ENCODE measurements at regions of chr11 and their contacts with region 1.

Region 1: DNA sequence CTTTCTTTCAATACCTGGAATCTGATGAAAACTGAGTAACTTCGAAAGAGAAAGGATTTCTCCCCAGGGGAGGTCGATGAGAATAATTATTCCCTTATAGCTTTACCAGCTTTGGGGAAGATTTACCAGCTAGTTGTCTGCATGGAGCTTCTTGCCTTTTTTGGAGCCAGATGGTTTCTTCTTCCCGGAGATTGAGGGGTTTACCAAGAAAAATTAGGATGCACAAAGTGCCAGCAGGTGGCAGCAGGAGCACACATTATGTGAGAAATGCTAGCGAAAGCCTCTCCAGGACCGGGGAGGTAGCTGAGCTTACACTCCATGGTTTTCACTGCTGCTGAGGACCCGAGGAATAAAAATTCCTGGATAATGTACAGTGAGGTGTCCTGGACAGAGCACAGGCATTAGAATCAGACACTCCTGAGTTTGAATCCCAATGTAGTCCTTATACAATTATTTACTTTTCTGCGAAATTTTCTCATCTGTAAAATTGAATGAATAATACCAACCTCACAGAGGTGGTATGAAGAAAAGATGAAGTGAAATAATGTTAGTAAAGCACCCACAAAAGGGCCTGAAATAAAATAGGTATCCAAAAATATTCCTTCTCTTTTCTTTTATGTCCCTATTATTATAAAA is 46.0 kb upstream of the PARVA start:
- DNase-seq: peak; percentile 85
- ATAC-seq: peak; percentile 36
- H3K4me3 Mint-ChIP-seq: no peak overlapping the region
- H3K27ac Mint-ChIP-seq: no peak overlapping the region
- H3K4me1 Mint-ChIP-seq: peaks cover 3% of the 10 kb centered on the region
- H3K27me3 Mint-ChIP-seq: no peaks in the 10 kb centered on the region

Region 2: GRCh38 chr11:11876458-11876857 is 454.9 kb before region 1 on chr11:
- CTCF ChIA-PET with region 1: no interaction called
- POLR2A ChIA-PET with region 1: no interaction called
- intact Hi-C with region 1: no loop called
- DNase-seq: peak; percentile 23
- ATAC-seq: no peak
- H3K4me3 Mint-ChIP-seq: no peak overlapping the region
- H3K27ac Mint-ChIP-seq: no peak overlapping the region
- H3K4me1 Mint-ChIP-seq: peaks cover 44% of the 10 kb centered on the region
- H3K27me3 Mint-ChIP-seq: no peaks in the 10 kb centered on the region

Region 3: DNA sequence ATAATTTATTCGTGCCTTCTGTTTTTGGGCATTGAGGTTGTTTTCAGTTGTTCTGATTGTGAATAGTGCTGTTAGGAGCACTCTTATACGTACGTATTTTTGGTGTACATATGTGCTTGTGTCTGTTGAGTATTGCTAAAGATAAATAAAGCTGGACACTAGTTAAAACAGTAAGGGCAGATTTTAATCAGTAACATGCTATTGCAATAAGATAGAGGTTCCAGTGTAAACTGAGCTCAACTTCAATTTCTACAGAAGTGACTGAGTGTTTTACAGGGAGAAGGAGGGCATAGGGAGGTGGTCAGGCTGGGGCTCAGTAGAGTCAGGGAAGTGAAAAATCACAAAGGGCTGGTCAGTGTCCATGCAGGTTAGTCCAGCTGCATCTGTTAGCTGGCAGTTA is 30.0 kb before region 1 on chr11:
- CTCF ChIA-PET with region 1: no interaction called
- POLR2A ChIA-PET with region 1: no interaction called
- intact Hi-C with region 1: no loop called
- DNase-seq: no peak
- ATAC-seq: no peak
- H3K4me3 Mint-ChIP-seq: no peak overlapping the region
- H3K27ac Mint-ChIP-seq: no peak overlapping the region
- H3K4me1 Mint-ChIP-seq: no peaks in the 10 kb centered on the region
- H3K27me3 Mint-ChIP-seq: no peaks in the 10 kb centered on the region

Region 4: GRCh38 chr11:12354750-12355545 is 23.6 kb after region 1 on chr11:
- CTCF ChIA-PET with region 1: interaction called, 13 read pairs
- POLR2A ChIA-PET with region 1: no interaction called
- intact Hi-C with region 1: no loop called
- DNase-seq: no peak
- ATAC-seq: no peak
- H3K4me3 Mint-ChIP-seq: no peak overlapping the region
- H3K27ac Mint-ChIP-seq: no peak overlapping the region
- H3K4me1 Mint-ChIP-seq: peaks cover 35% of the 10 kb centered on the region
- H3K27me3 Mint-ChIP-seq: no peaks in the 10 kb centered on the region

Region 5: GRCh38 chr11:12411806-12412727 is 80.7 kb after region 1 on chr11:
- CTCF ChIA-PET with region 1: interaction called, 8 read pairs
- POLR2A ChIA-PET with region 1: no interaction called
- intact Hi-C with region 1: loop called (anchors 1 to 5 kb)
- DNase-seq: peak; percentile 65
- ATAC-seq: peak; percentile 65
- H3K4me3 Mint-ChIP-seq: no peak overlapping the region
- H3K27ac Mint-ChIP-seq: no peak overlapping the region
- H3K4me1 Mint-ChIP-seq: no peaks in the 10 kb centered on the region
- H3K27me3 Mint-ChIP-seq: peaks cover 13% of the 10 kb centered on the region

Region 6: DNA sequence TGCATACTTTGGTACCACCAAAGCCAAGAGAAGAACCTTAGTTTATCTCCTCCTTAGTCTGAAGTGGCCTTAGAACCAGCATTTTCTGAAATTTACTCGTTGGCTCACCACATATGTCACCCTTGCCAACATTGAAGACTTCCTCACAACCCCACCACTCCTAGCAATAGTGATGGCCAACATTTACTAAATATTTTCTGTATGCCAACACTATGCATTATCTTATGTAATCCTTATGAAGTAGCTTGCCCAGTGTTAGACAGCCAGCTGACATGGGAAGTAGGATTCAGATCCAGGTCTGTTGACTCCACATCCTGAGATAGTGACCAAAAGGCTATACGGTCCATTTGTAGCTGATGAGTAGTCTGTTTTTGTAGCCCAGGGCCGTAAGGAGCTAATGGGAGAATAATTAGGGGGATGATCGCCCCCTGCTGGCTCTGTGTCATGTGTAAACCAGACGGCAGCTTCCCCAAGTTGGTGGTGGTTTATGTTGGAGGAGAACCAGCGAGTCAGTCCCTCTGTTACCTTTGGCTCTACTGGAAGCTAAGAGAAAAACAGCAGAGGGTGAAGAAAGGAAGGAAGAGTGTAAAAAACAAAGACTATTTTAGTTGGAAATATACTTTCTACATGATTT is 557.3 kb after region 1 on chr11:
- CTCF ChIA-PET with region 1: interaction called, 49 read pairs
- POLR2A ChIA-PET with region 1: no interaction called
- intact Hi-C with region 1: loop called in 1 of 2 experiments (anchors 1 kb)
- DNase-seq: peak; percentile 82
- ATAC-seq: peak; percentile 33
- H3K4me3 Mint-ChIP-seq: no peak overlapping the region
- H3K27ac Mint-ChIP-seq: no peak overlapping the region
- H3K4me1 Mint-ChIP-seq: no peaks in the 10 kb centered on the region
- H3K27me3 Mint-ChIP-seq: peaks cover 4% of the 10 kb centered on the region

Region 7: DNA sequence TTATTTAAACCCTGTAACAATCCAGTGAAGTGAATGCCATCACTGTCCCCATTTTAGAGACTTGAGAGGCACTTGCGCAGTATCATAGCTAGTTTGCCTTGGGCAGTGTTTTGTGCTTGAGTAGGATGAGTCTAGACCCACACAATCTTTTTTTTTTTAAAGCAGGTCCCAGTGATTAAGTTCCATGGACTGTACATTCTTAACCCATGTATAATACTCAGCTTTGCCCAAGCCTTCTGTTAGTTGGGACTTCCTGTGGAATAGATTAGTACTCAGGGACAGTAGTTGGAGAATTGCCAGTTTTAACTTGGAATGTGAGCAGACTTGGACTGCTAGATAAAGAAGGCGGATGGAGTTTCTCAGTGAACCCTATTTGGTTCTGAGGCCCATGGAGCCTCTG is 569.1 kb after region 1 on chr11:
- CTCF ChIA-PET with region 1: interaction called, 12 read pairs
- POLR2A ChIA-PET with region 1: no interaction called
- intact Hi-C with region 1: no loop called
- DNase-seq: no peak
- ATAC-seq: no peak
- H3K4me3 Mint-ChIP-seq: no peak overlapping the region
- H3K27ac Mint-ChIP-seq: no peak overlapping the region
- H3K4me1 Mint-ChIP-seq: peaks cover 4% of the 10 kb centered on the region
- H3K27me3 Mint-ChIP-seq: peaks cover 8% of the 10 kb centered on the region

Measured in activated CD4-positive, alpha-beta T cell treated with anti-CD3 and anti-CD28 coated beads for 36 hours (primary cell).